HEK293 (cell line): ENCODE measurements at regions of chr1 and their contacts with region 1.

Region 1: DNA sequence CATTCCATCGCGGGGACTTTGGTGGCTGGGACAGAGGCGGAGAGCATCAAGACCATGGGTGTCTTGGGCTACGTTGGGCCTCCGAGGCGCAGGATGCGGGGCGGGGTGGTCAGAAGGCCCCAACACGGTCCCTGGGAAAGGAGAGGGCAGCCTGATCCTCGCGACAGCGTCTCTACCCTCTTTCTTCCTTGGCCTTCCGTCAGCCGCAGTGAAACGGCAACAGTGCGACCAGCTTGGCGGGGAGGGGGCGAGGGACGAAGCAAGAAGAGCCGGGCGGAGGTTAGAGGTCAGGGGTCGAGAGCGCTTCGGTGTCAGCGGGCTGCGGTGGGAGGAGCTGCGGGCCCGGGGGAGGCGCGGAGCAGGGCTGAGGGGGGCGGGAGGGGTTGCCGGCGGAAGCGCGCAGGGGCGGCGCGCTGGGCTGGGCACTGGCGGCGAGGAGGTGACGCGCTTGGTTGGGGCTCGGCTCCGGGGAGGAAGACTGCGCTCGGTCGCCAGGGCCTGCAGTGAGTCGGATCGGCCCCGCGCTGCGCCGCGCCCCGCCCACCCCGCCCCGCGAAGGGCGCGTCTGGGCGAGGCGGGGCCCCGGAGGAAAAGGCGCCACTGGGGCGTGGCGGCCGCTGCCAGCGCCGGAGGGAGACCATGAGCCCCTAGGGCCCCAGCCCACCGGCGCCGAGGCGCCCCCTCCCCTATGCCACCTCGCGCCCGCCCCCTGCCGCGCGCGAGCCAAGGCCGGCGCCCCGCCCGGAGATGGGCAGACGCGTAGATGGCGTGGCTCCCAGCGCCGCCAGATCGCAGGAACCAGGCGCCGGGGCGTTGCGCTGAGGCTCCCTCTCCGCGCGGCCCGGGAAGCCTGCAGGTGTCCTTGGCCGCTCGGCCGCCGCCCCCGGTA is at the start of gene KCNC4:
- H3K4me3 ChIP-seq: peak within 1 kb of the TSS; percentile 56
- H3K27ac ChIP-seq: peak within 1 kb of the TSS; percentile 78
- H3K4me1 ChIP-seq: peaks cover 7% of the 10 kb centered on the region
- CTCF ChIP-seq: no peak

Region 2: DNA sequence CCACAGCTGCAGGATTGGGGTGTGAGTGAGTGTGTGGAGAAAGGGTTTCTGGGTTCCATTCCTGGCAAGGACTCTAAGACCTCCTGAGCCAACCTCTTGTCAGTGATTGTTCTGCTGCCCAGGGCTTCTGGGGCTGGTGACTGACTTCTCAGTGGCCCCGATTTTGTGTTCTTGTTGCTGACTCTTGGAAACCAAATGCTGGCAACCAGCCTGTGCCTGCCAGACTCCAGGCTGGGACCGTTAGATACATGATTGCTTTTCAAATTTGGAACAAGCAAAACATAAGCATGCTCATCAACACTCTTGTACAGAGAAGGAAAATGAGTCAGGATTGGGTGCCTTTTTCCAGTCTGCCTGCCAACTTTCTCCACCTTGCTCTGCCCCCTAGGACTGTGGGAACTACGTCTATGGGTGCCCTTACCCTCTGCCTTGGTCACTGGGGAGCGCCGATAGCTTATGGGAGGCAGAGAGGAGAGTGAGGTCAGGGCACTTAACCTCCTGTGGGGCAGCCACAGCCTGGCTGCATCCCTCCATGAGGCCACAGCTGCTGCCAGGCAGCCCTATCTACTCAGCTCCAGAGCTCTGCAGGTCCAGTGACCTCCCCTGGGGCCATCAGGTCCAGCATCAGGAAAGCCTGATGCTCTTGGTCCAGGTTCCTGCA is 406.9 kb before region 1 on chr1:
- CTCF ChIA-PET with region 1: no interaction called
- POLR2A ChIA-PET with region 1: no interaction called
- H3K4me3 ChIP-seq: no peak overlapping the region
- H3K27ac ChIP-seq: no peak overlapping the region
- H3K4me1 ChIP-seq: no peaks in the 10 kb centered on the region
- CTCF ChIP-seq: no peak

Region 3: GRCh38 chr1:109821221-109821669 is 388.7 kb before region 1 on chr1:
- CTCF ChIA-PET with region 1: no interaction called
- POLR2A ChIA-PET with region 1: no interaction called
- H3K4me3 ChIP-seq: no peak overlapping the region
- H3K27ac ChIP-seq: no peak overlapping the region
- H3K4me1 ChIP-seq: no peaks in the 10 kb centered on the region
- CTCF ChIP-seq: no peak

Region 4: GRCh38 chr1:110076789-110077500 is 133.0 kb before region 1 on chr1:
- CTCF ChIA-PET with region 1: no interaction called
- POLR2A ChIA-PET with region 1: no interaction called
- H3K4me3 ChIP-seq: no peak overlapping the region
- H3K27ac ChIP-seq: no peak overlapping the region
- H3K4me1 ChIP-seq: no peaks in the 10 kb centered on the region
- CTCF ChIP-seq: no peak

Region 5: GRCh38 chr1:110196917-110197765 is 12.8 kb before region 1 on chr1:
- CTCF ChIA-PET with region 1: interaction called, 28 read pairs
- POLR2A ChIA-PET with region 1: no interaction called
- H3K4me3 ChIP-seq: no peak overlapping the region
- H3K27ac ChIP-seq: no peak overlapping the region
- H3K4me1 ChIP-seq: no peaks in the 10 kb centered on the region
- CTCF ChIP-seq: peak; percentile 63; the same call in 1 of the 2 replicates

Region 6: GRCh38 chr1:110243574-110243973 is 33.6 kb after region 1 on chr1:
- CTCF ChIA-PET with region 1: interaction called, 17 read pairs
- POLR2A ChIA-PET with region 1: no interaction called
- H3K4me3 ChIP-seq: no peak overlapping the region
- H3K27ac ChIP-seq: no peak overlapping the region
- H3K4me1 ChIP-seq: no peaks in the 10 kb centered on the region
- CTCF ChIP-seq: no peak

Region 7: DNA sequence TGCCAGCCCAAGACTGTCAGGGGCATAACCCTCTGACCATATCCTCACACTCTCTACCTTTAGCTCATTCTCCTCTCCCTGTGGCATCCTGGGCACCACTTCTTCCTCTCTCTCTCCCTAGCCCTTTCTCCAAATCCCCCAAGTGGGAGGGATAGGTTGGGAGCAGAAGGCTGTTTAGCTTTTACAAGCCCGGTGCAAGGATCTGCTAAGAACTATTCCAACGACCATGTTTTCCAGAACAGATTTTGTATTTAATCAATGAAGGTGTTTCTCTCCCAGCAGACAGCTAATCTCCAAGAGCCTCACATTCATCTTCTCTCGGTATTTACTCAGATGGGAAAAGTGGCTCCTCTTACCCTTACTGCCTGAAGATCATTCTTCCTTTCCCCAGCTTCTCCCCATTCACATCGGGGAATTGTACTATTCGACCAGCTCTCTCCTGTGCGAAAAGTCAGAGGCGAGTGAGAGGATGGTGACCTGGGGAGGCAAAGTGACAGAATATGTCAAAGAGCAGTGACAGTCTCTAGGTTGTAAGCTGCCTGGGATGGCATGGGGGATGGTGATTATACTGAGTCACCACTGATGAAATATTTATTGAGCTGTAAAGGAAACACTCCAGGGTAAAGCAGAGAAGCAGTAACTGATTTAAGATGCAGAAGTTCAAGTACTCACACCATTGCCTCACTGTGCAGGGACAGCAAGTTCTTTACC is 82.2 kb after region 1 on chr1:
- CTCF ChIA-PET with region 1: interaction called, 24 read pairs
- POLR2A ChIA-PET with region 1: no interaction called
- H3K4me3 ChIP-seq: no peak overlapping the region
- H3K27ac ChIP-seq: no peak overlapping the region
- H3K4me1 ChIP-seq: peaks cover 17% of the 10 kb centered on the region
- CTCF ChIP-seq: no peak

Region 8: GRCh38 chr1:110312188-110313121 is 102.5 kb after region 1 on chr1:
- CTCF ChIA-PET with region 1: interaction called, 662 read pairs
- POLR2A ChIA-PET with region 1: interaction called, 13 read pairs
- H3K4me3 ChIP-seq: no peak overlapping the region
- H3K27ac ChIP-seq: no peak overlapping the region
- H3K4me1 ChIP-seq: no peaks in the 10 kb centered on the region
- CTCF ChIP-seq: peak; percentile 93

Region 9: GRCh38 chr1:110338886-110339406 is 129.0 kb after region 1 on chr1 and contains the start of gene RBM15:
- CTCF ChIA-PET with region 1: interaction called, 57 read pairs
- POLR2A ChIA-PET with region 1: interaction called, 26 read pairs
- H3K4me3 ChIP-seq: peak within 1 kb of the TSS; percentile 78
- H3K27ac ChIP-seq: peak within 1 kb of the TSS; percentile 88
- H3K4me1 ChIP-seq: peaks cover 13% of the 10 kb centered on the region
- CTCF ChIP-seq: no peak

Region 10: GRCh38 chr1:110449661-110450651 is 240.0 kb after region 1 on chr1:
- CTCF ChIA-PET with region 1: interaction called, 10 read pairs
- POLR2A ChIA-PET with region 1: no interaction called
- H3K4me3 ChIP-seq: no peak overlapping the region
- H3K27ac ChIP-seq: no peak overlapping the region
- H3K4me1 ChIP-seq: no peaks in the 10 kb centered on the region
- CTCF ChIP-seq: no peak

Region 11: GRCh38 chr1:110554871-110555801 is 345.2 kb after region 1 on chr1:
- CTCF ChIA-PET with region 1: no interaction called
- POLR2A ChIA-PET with region 1: no interaction called
- H3K4me3 ChIP-seq: 0 out of 2 replicates have a peak overlapping the region, but pooled peaks have one; percentile 4
- H3K27ac ChIP-seq: no peak overlapping the region
- H3K4me1 ChIP-seq: no peaks in the 10 kb centered on the region
- CTCF ChIP-seq: peak; percentile 69